HEK293 (cell line): ENCODE measurements at regions of chr3 and their contacts with region 1.

Region 1: GRCh38 chr3:13091898-13092611 is 18.8 kb upstream of the IQSEC1 start:
- H3K4me3 ChIP-seq: no peak overlapping the region
- H3K27ac ChIP-seq: no peak overlapping the region
- H3K4me1 ChIP-seq: no peaks in the 10 kb centered on the region
- CTCF ChIP-seq: peak; percentile 67

Region 2: GRCh38 chr3:13106308-13107001 is 14.4 kb after region 1 on chr3:
- CTCF ChIA-PET with region 1: interaction called, 14 read pairs
- POLR2A ChIA-PET with region 1: no interaction called
- H3K4me3 ChIP-seq: no peak overlapping the region
- H3K27ac ChIP-seq: no peak overlapping the region
- H3K4me1 ChIP-seq: no peaks in the 10 kb centered on the region; the same call in 1 of the 2 replicates
- CTCF ChIP-seq: no peak

Region 3: DNA sequence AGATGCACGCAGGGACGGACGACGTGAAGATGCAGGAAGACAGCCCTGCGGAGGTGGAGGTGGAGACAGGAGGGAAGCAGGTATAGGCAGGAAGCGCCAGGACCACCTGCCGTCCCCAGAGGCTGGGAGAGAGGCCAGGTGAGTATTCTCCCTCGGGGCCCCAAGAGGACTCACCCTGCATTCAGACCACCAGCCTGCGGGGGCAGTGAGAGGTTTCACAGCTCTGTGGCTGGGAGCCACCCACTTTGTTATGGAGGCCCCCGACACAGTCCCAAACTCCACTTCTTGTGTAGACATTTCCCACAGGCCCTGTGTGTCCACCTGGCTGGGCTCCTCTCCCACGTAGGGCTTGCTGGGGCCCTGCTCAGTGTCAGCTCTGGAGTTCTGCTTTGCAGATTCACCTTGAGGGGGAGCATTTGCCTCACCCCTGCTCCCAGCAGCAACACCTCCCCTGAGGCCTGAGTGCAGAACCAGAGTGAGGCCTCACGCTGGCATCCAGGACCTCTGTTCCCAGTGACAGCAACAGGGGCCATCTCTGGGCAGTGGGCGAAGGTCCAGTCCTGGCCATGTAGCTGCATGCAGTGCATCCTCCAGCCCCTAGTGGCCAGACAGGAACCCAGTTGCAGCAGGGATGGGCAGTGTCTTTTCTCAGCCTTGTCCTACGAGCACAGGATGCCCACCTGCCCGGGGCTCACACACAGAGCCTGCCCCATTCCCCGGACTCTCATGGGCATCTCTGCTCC is 100.6 kb after region 1 on chr3:
- CTCF ChIA-PET with region 1: interaction called, 13 read pairs
- POLR2A ChIA-PET with region 1: no interaction called
- H3K4me3 ChIP-seq: no peak overlapping the region
- H3K27ac ChIP-seq: no peak overlapping the region
- H3K4me1 ChIP-seq: no peaks in the 10 kb centered on the region
- CTCF ChIP-seq: no peak; the same call in 1 of the 2 replicates

Region 4: DNA sequence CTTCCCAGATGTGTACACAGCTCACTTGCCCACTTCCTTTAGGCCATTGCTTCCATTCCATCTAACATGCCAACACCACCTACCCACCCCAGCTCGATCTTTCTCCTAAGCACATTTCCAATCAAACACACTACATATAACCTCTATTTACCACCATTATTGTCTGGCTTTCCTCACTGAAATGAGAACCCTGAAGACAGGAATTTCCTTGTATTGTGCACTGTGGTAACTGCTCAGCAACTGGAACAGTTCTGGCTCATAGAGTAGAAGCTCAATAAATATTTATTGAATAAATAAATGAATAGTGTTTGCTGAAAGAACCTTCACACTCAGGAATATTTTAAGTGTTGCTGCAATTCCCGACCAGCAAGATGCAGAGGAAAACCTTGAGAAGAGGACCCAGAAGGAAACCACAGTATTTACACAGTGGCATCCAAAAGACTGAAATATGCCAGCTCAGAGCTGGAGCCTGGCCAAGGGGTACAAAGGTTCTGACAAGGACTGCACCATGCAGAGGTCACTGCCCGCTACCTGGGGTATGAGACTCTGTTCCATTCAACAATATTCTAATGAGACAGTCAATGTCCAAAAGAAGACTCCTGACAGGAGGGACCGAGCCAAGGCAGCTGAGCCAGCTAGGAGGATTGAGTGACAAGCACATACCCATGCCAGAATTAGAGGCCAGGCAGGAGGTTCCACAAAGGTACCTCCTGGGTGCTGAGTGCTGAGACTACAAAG is 159.3 kb after region 1 on chr3:
- CTCF ChIA-PET with region 1: interaction called, 11 read pairs
- POLR2A ChIA-PET with region 1: no interaction called
- H3K4me3 ChIP-seq: no peak overlapping the region
- H3K27ac ChIP-seq: no peak overlapping the region
- H3K4me1 ChIP-seq: no peaks in the 10 kb centered on the region
- CTCF ChIP-seq: no peak

Region 5: GRCh38 chr3:13268961-13269441 is 176.9 kb after region 1 on chr3:
- CTCF ChIA-PET with region 1: no interaction called
- POLR2A ChIA-PET with region 1: no interaction called
- H3K4me3 ChIP-seq: no peak overlapping the region
- H3K27ac ChIP-seq: no peak overlapping the region
- H3K4me1 ChIP-seq: no peaks in the 10 kb centered on the region
- CTCF ChIP-seq: no peak

Region 6: DNA sequence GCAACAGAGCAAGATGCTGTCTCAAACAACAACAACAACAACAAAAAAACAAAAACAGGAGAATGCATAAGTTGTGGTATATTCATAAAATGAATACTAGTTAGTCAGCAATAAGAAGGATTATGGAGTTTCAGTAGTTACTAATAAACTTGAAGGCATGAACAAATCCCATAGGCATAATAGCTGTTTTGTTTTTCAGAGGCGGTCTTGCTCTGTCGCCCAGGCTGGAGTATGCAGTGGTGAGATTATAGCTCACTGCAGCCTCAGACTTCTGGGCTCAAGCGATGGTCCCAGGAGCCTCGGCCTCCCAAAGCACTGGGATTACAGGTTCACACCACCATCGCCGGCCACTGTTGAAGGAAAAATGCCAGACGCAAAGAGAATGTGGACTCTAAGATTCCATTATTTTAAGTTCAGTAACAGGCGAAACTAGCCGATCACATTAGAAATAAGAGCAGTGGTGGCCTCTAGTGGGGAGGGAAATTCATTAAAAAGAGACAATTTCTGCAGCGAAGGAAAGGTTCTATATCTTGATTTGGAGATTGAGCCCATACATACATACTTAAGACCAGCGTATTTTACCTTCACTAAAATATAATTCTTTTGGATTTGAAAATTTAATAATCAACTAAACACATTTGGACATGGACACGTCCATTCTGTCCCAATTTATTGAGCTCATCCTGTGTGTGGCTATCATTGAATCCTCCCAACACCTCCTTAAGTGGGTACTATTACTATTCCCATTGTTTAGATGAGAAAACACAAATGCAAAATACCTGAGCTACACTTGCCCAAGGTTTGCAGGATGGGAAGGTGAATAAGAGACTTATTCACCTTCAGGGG is 360.7 kb after region 1 on chr3:
- CTCF ChIA-PET with region 1: interaction called, 15 read pairs
- POLR2A ChIA-PET with region 1: interaction called, 3 read pairs
- H3K4me3 ChIP-seq: no peak overlapping the region
- H3K27ac ChIP-seq: no peak overlapping the region; the same call in 1 of the 2 replicates
- H3K4me1 ChIP-seq: no peaks in the 10 kb centered on the region
- CTCF ChIP-seq: peak; percentile 58; the same call in 1 of the 2 replicates

Region 7: GRCh38 chr3:13461169-13462158 is 369.4 kb after region 1 on chr3:
- CTCF ChIA-PET with region 1: interaction called, 51 read pairs
- POLR2A ChIA-PET with region 1: no interaction called
- H3K4me3 ChIP-seq: no peak overlapping the region
- H3K27ac ChIP-seq: no peak overlapping the region
- H3K4me1 ChIP-seq: no peaks in the 10 kb centered on the region
- CTCF ChIP-seq: peak; percentile 51; the same call in 1 of the 2 replicates